ENCODE measurements at regions of chr11 and their contacts with region 1.

Region 1: DNA sequence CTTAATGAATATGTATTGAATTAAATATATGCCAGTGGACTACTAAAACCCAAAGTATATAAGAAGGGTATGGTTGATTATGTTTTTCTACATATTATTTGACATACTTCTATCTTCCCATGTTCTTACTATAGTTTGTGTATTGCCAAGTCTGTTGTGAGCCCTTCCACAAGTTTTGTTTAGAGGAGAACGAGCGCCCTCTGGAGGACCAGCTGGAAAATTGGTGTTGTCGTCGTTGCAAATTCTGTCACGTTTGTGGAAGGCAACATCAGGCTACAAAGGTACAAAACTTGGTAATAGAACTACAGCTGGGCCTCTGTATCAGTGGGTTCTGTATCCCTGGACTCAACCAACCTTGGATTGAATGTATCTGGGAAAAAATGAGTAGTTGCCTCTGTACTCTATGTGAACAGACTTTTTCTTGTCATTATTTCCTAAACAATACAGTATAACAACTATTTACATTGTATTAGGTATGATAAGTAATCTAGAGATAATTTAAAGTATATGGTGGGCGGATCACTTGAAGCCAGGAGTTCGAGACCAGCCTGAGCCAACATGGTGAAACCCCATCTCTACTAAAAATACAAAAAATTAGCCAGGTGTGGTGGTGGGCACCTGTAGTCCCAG is 38.7 kb upstream of the TTC36 start:
- DNase-seq: peak; percentile 86
- H3K4me3 Mint-ChIP-seq: no peak overlapping the region
- H3K27ac Mint-ChIP-seq: no peak overlapping the region
- H3K4me1 Mint-ChIP-seq: peaks cover 5% of the 10 kb centered on the region
- H3K27me3 Mint-ChIP-seq: no peaks in the 10 kb centered on the region

Region 2: DNA sequence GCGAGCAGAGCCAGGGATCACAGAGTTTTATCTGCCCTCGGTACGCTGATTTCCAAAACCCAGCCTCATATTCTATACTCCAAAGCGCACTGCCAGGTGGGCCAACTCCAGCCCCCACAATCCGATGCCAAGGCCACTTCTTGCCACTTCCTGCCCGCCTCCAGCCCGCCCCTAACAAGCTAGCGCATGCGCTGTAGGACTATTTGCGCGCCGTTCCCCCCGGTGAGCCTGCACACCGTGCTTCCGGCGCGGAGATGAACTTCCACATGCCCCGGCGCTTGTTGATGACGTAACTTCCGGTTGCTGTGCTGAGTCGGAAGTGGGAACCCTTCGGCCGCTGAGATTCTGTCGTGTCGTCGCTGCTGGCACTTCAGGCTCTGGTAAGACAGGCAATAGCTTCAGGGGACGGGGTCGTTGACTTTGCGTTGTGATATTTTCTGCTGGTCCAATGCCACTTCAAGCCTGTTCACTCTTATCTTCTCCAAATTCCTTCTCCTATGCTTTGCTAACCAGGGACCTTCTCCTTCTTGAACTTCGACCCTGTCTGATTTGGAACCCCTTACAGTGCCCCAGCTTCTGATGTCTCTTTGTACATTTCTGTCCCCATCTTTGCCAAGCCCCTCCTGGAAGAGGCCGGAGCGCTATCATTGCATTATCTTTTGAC is 129.2 kb before region 1 on chr11 and contains the start of gene UBE4A:
- CTCF ChIA-PET with region 1: interaction called, 3 read pairs
- POLR2A ChIA-PET with region 1: no interaction called
- intact Hi-C with region 1: loop called (anchors 5 kb)
- DNase-seq: peak; percentile 99
- H3K4me3 Mint-ChIP-seq: peak within 1 kb of the TSS; percentile 96
- H3K27ac Mint-ChIP-seq: peak within 1 kb of the TSS; percentile 93
- H3K4me1 Mint-ChIP-seq: peaks cover 45% of the 10 kb centered on the region
- H3K27me3 Mint-ChIP-seq: peaks cover 2% of the 10 kb centered on the region
- total RNA-seq, gene UBE4A: 39.1 to 40.4 TPM

Region 3: GRCh38 chr11:118380571-118380970 is 108.0 kb before region 1 on chr11:
- CTCF ChIA-PET with region 1: interaction called, 15 read pairs
- POLR2A ChIA-PET with region 1: no interaction called
- intact Hi-C with region 1: no loop called
- DNase-seq: no peak
- H3K4me3 Mint-ChIP-seq: no peak overlapping the region
- H3K27ac Mint-ChIP-seq: no peak overlapping the region
- H3K4me1 Mint-ChIP-seq: peaks cover 6% of the 10 kb centered on the region
- H3K27me3 Mint-ChIP-seq: no peaks in the 10 kb centered on the region

Region 4: GRCh38 chr11:118448294-118448693 is 40.3 kb before region 1 on chr11:
- CTCF ChIA-PET with region 1: interaction called, 10 read pairs
- POLR2A ChIA-PET with region 1: no interaction called
- intact Hi-C with region 1: no loop called
- DNase-seq: no peak
- H3K4me3 Mint-ChIP-seq: no peak overlapping the region
- H3K27ac Mint-ChIP-seq: no peak overlapping the region
- H3K4me1 Mint-ChIP-seq: peaks cover 72% of the 10 kb centered on the region
- H3K27me3 Mint-ChIP-seq: no peaks in the 10 kb centered on the region

Region 5: DNA sequence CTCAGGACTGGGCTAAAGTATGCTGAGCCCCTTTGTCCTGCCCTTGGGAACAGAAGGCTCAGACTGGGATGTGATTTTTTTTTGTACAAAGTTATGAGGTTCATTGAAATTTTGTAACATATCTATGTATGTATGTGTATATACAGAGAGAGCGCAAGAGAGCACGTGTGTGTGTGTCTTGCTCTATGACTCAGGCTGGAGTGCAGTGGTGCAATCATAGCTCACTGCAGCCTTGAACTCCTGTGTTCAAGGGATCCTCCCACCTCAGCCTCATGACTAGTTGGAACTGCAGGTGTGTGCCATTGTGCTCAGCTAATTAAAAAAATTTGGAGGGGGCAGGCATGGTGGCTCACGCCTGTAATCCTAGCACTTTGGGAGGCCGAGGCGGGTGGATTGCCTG is 48.1 kb after region 1 on chr11:
- CTCF ChIA-PET with region 1: no interaction called
- POLR2A ChIA-PET with region 1: no interaction called
- intact Hi-C with region 1: no loop called
- DNase-seq: no peak
- H3K4me3 Mint-ChIP-seq: no peak overlapping the region
- H3K27ac Mint-ChIP-seq: no peak overlapping the region
- H3K4me1 Mint-ChIP-seq: peaks cover 4% of the 10 kb centered on the region
- H3K27me3 Mint-ChIP-seq: no peaks in the 10 kb centered on the region

Region 6: GRCh38 chr11:118592616-118593367 is 104.2 kb after region 1 on chr11:
- CTCF ChIA-PET with region 1: no interaction called
- POLR2A ChIA-PET with region 1: no interaction called
- intact Hi-C with region 1: no loop called
- DNase-seq: no peak
- H3K4me3 Mint-ChIP-seq: no peak overlapping the region
- H3K27ac Mint-ChIP-seq: no peak overlapping the region
- H3K4me1 Mint-ChIP-seq: peaks cover 14% of the 10 kb centered on the region
- H3K27me3 Mint-ChIP-seq: no peaks in the 10 kb centered on the region

Region 7: DNA sequence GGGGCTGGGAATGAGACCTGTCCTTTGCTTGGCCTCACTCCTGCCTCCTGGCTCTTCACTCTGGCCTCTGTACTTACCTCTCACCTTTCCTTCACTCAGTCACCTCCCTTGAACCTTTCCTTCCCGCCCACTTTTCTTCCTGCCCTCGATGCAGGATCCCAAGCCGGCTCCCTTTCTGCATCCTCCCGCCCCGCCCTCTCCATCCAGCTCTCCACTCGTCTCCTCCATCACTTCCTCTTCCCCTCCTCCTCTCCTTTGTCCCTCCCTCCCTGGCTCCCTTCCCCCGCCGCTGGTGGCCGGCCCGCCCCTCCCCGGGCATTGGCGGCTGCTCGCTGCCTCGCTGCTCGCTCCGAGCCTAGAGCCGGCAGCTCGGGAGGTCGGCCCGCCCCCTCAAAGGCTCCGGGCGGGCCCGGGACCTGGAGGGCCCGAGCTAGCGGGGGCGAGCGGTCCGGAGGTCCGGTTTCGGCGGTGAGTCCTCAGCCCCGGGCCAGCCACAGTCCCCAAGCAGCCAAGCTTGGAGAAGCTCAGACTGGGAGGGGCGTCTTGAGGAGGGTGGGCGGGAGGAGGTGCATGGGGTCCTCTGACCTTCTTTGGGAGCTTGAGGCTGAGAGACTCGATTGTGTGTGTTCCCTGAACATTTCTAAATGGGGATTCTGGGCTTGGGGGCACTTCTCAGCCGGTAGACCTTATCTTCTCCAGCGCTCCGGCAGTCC is 132.6 kb after region 1 on chr11:
- CTCF ChIA-PET with region 1: no interaction called
- POLR2A ChIA-PET with region 1: no interaction called
- intact Hi-C with region 1: no loop called
- DNase-seq: peak; percentile 46
- H3K4me3 Mint-ChIP-seq: peak overlapping the region; percentile 40
- H3K27ac Mint-ChIP-seq: no peak overlapping the region
- H3K4me1 Mint-ChIP-seq: peaks cover 8% of the 10 kb centered on the region
- H3K27me3 Mint-ChIP-seq: peaks cover 16% of the 10 kb centered on the region